CD8-positive, alpha-beta memory T cell (primary cell): ENCODE measurements at regions of chr17 and their contacts with region 1.

Region 1: DNA sequence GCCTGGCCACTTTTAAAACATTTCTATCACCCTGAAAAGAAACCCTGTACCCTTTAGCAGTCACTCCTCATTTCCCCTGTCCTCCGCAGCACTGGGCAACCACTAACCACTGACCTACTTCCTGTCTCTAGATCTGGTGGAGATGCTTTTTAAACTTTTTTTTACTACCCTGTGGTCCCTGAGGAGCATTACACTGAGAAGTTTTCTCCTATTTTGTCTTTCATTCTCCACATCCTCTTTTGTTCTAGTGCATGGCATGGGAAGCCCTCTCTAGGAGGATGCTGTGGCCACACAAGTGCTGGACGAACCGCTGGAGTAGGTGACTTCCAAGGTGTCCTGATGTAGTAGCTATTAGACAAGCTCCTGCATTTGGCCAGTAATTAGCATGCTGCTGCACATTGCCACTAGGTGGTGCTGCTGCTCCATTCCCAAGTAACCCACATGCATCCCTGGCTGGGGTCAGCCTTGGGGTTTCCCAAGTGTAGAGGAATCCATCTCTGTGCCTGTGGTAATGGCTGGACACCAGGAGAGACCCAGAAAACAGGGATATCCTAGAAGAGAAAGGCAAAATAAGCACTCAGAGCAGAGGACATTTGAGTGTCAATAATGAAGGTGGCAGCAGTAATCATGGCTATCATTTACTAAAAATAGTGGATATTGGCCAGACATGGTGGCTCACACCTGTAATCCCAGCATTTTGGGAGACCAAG is 143.8 kb upstream of the CRHR1 start:
- DNase-seq: peak; percentile 56 to 79 (median 59)
- H3K4me3 ChIP-seq: no peak overlapping the region
- H3K4me3 Mint-ChIP-seq: no peak overlapping the region
- H3K27ac ChIP-seq: no peak overlapping the region
- H3K27ac Mint-ChIP-seq: peak overlapping the region in 6 of 8 donors; percentile 2 to 83 (median 40)
- H3K4me1 ChIP-seq: peaks cover 5% of the 10 kb centered on the region
- H3K4me1 Mint-ChIP-seq: peaks cover 7 to 8% (median 8%) of the 10 kb centered on the region in 3 donors
- H3K27me3 ChIP-seq: no peaks in the 10 kb centered on the region
- H3K27me3 Mint-ChIP-seq: no peaks in the 10 kb centered on the region

Region 2: GRCh38 chr17:45628019-45628418 is 12.3 kb before region 1 on chr17:
- CTCF ChIA-PET with region 1: interaction called, 11 read pairs
- POLR2A ChIA-PET with region 1: interaction called, 3 read pairs
- DNase-seq: no peak
- H3K4me3 ChIP-seq: no peak overlapping the region
- H3K4me3 Mint-ChIP-seq: no peak overlapping the region
- H3K27ac ChIP-seq: no peak overlapping the region
- H3K27ac Mint-ChIP-seq: no peak overlapping the region
- H3K4me1 ChIP-seq: no peaks in the 10 kb centered on the region
- H3K4me1 Mint-ChIP-seq: peaks cover 0 to 3% (median 0%) of the 10 kb centered on the region in 3 donors
- H3K27me3 ChIP-seq: no peaks in the 10 kb centered on the region
- H3K27me3 Mint-ChIP-seq: no peaks in the 10 kb centered on the region

Region 3: GRCh38 chr17:45828628-45829027 is 188.3 kb after region 1 on chr17:
- CTCF ChIA-PET with region 1: interaction called, 67 read pairs
- POLR2A ChIA-PET with region 1: no interaction called
- DNase-seq: no peak
- H3K4me3 ChIP-seq: no peak overlapping the region
- H3K4me3 Mint-ChIP-seq: no peak overlapping the region
- H3K27ac ChIP-seq: no peak overlapping the region
- H3K27ac Mint-ChIP-seq: no peak overlapping the region
- H3K4me1 ChIP-seq: no peaks in the 10 kb centered on the region
- H3K4me1 Mint-ChIP-seq: peaks cover 0 to 7% (median 0%) of the 10 kb centered on the region in 3 donors
- H3K27me3 ChIP-seq: no peaks in the 10 kb centered on the region
- H3K27me3 Mint-ChIP-seq: peaks cover 9 to 16% of the 10 kb centered on the region in 2 donors